ENCODE measurements at regions of chr22 and their contacts with region 1.

Region 1: DNA sequence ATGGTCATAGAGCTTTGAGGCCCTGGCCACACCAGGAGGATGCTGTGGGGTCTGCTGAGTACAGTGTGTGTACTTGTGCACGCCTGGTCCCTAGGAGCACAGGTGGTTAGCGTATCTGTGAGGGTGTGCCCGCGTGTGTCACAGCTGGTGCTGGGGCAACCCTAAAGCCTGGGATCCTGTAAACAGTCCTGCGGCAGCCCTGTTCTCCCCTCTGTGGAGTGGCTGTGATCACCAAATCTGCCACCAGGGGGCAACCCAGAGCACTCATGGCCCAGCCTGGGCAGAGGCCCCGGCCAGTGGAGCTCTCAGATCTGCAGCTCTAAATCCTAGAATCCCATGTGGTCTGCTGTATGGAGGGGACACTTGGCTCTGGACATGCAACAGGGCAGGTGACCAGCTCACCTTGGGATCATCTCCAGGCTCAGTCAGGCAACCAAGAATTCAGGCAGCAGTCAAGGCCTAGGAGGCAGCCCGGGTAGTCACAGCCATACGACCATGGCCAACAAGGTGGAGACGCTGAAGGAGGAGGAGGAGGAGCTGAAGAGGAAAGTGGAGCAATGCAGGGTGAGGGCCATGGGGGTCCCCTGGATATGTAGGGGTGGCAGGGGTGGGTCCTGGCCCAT is 3.9 kb downstream of the SH3BP1 start:
- DNase-seq: peak; percentile 70
- H3K4me3 ChIP-seq: no peak overlapping the region
- H3K27ac ChIP-seq: no peak overlapping the region
- H3K4me1 ChIP-seq: peaks cover 2% of the 10 kb centered on the region
- H3K27me3 ChIP-seq: no peaks in the 10 kb centered on the region
- CTCF ChIP-seq: peak; percentile 84 to 95
- POLR2A ChIP-seq: no peak

Region 2: DNA sequence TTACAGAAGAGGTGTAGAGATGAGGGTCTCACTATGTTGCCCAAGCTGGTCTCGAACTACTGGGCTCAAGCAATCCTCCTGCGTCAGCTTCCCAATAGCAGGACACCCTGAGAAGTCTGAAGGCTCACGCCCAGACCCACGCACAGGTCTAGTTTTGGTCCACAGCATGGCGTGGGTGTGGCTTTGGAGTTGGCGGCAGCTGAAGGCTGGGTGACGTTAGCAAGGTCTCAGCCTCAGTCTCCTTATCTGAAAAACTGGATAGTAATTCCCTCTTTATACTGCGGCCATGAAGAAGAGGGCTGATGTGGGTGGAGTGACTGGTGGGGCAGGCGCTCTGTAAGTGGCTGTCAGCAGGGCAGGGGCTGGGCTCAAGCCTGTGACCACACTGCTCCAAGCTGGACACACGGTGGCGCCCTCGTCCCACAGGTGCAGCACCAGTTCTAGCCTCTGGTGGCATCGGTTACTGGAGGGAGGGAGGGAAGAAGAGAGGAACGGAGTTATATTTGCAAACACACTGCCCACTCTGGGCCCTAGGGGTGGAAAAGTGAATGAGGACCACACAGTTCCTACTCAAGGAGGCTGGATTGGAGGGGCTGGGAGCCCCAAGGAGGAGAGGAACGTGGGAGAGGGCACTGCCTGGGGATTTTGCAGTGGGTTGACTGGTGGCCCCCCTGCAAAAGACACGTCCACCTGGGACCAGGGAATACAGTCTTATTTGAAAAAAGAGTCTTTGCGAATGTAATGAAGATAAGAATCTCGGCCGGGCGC is 104.6 kb before region 1 on chr22:
- CTCF ChIA-PET with region 1: interaction called, 13 read pairs
- POLR2A ChIA-PET with region 1: no interaction called
- dilution Hi-C with region 1: no loop called
- intact Hi-C with region 1: no loop called
- DNase-seq: peak; percentile 91
- H3K4me3 ChIP-seq: no peak overlapping the region
- H3K27ac ChIP-seq: no peak overlapping the region
- H3K4me1 ChIP-seq: peaks cover 3% of the 10 kb centered on the region
- H3K27me3 ChIP-seq: no peaks in the 10 kb centered on the region
- CTCF ChIP-seq: peak; percentile 95 to 98
- POLR2A ChIP-seq: no peak

Region 3: DNA sequence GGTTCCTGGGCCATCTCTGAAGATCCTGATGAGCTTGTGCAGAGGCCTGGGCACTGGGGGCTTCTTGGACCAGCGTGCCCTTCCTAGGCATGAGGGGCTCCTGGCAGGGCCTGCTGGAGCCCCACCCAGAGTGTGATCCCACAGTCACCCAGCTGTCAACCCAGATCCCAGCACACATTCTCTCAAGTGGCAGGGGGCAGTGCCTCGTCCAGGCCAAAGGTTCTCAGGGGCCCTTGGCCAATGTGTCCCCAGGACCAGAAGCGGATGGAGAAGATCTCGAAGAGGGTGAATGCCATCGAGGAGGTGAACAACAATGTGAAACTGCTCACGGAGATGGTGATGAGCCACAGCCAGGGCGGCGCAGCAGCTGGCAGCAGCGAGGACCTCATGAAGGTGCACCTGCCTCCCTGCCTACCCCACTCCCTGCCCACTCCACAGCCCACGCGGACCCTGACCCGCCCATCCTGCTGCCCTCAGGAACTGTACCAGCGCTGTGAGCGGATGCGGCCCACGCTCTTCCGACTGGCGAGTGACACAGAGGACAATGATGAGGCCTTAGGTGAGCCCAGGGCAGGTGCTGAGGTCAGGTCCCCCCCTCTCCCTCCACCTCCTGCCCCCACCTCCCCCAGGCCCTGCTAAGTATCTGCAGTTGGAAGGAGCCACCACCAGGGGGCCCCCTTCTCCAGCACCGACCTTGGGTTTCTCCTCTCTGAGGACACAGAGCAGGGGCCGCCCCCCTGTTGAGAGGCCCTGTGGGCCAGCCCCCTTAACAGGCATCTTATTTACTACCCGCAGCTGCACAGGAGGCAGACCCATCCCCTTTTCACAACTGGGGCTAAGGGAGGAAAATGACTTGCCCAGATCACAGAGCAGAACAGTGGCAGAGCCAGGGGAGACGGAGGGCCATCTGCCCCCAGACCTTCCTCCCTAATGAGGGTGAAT is 20.0 kb before region 1 on chr22:
- CTCF ChIA-PET with region 1: interaction called, 28 read pairs
- POLR2A ChIA-PET with region 1: interaction called, 4 read pairs
- dilution Hi-C with region 1: no loop called
- intact Hi-C with region 1: no loop called
- DNase-seq: peak; percentile 44
- H3K4me3 ChIP-seq: no peak overlapping the region
- H3K27ac ChIP-seq: no peak overlapping the region
- H3K4me1 ChIP-seq: peaks cover 7% of the 10 kb centered on the region
- H3K27me3 ChIP-seq: no peaks in the 10 kb centered on the region
- CTCF ChIP-seq: peak; percentile 51 to 87
- POLR2A ChIP-seq: no peak

Region 4: GRCh38 chr22:37676736-37677492 is 33.6 kb after region 1 on chr22:
- CTCF ChIA-PET with region 1: interaction called, 307 read pairs
- POLR2A ChIA-PET with region 1: interaction called, 8 read pairs
- dilution Hi-C with region 1: no loop called
- intact Hi-C with region 1: loop called (anchors 1 kb)
- DNase-seq: peak; percentile 95
- H3K4me3 ChIP-seq: peak overlapping the region; percentile 63 to 80 (median 66)
- H3K27ac ChIP-seq: peak overlapping the region; percentile 81
- H3K4me1 ChIP-seq: peaks cover 9% of the 10 kb centered on the region
- H3K27me3 ChIP-seq: no peaks in the 10 kb centered on the region
- CTCF ChIP-seq: no peak
- POLR2A ChIP-seq: peak; percentile 81

Region 5: GRCh38 chr22:37728620-37729019 is 85.3 kb after region 1 on chr22:
- CTCF ChIA-PET with region 1: interaction called, 48 read pairs
- POLR2A ChIA-PET with region 1: no interaction called
- dilution Hi-C with region 1: no loop called
- intact Hi-C with region 1: no loop called
- DNase-seq: no peak
- H3K4me3 ChIP-seq: no peak overlapping the region
- H3K27ac ChIP-seq: no peak overlapping the region
- H3K4me1 ChIP-seq: no peaks in the 10 kb centered on the region
- H3K27me3 ChIP-seq: no peaks in the 10 kb centered on the region
- CTCF ChIP-seq: no peak
- POLR2A ChIP-seq: no peak

Region 6: GRCh38 chr22:37781479-37781911 is 138.2 kb after region 1 on chr22:
- CTCF ChIA-PET with region 1: interaction called, 11 read pairs
- POLR2A ChIA-PET with region 1: no interaction called
- dilution Hi-C with region 1: no loop called
- intact Hi-C with region 1: no loop called
- DNase-seq: no peak
- H3K4me3 ChIP-seq: no peak overlapping the region
- H3K27ac ChIP-seq: no peak overlapping the region
- H3K4me1 ChIP-seq: peaks cover 15% of the 10 kb centered on the region
- H3K27me3 ChIP-seq: no peaks in the 10 kb centered on the region
- CTCF ChIP-seq: peak; percentile 21 to 41
- POLR2A ChIP-seq: no peak

Region 7: DNA sequence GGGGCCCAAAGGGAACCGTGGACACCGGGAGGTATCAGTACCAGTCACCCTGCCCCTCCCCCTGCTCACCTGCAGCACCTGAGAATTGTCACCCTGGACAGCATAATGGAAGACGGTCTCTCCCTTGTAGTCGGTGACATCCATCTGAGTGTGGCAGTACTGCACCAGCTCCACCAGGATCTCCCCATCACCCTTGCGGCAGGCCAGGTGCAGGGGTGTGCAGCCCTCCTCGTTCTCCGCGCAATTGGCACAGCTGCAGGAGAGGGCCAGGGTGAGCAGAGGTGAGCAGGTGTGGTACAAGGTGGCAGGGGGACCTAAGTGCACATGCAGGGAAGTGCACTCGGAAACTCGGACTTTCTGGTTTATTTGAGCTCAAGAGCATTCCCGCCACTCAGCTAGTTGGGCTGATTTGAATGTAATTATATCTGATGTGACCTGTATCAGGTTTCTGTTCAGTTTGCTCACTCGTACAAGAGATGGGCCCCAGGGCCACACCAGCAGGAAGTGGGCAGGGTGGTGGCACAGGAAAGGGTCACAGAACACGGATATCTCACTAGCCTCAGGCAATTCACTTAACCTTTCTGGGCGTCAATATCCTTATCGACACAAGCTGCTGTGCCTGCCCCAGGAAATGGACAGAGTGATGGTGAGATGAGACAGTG is 499.8 kb after region 1 on chr22:
- CTCF ChIA-PET with region 1: no interaction called
- POLR2A ChIA-PET with region 1: no interaction called
- dilution Hi-C with region 1: no loop called
- intact Hi-C with region 1: no loop called
- DNase-seq: peak; percentile 16
- H3K4me3 ChIP-seq: no peak overlapping the region
- H3K27ac ChIP-seq: no peak overlapping the region
- H3K4me1 ChIP-seq: peaks cover 7% of the 10 kb centered on the region
- H3K27me3 ChIP-seq: no peaks in the 10 kb centered on the region
- CTCF ChIP-seq: no peak
- POLR2A ChIP-seq: no peak

Measured in endothelial cell of umbilical vein (primary cell).